ENCODE measurements at regions of chr4 and their contacts with region 1.

Region 1: GRCh38 chr4:152679414-152680281 is at the start of gene TMEM154:
- DNase-seq: peak; percentile 97
- H3K4me3 ChIP-seq: peak within 1 kb of the TSS; percentile 71 to 85 (median 81)
- H3K27ac ChIP-seq: peak within 1 kb of the TSS; percentile 98
- H3K4me1 ChIP-seq: peaks cover 46% of the 10 kb centered on the region
- H3K27me3 ChIP-seq: no peaks in the 10 kb centered on the region
- CTCF ChIP-seq: no peak
- total RNA-seq, gene TMEM154: 15.2 to 119 TPM

Region 2: DNA sequence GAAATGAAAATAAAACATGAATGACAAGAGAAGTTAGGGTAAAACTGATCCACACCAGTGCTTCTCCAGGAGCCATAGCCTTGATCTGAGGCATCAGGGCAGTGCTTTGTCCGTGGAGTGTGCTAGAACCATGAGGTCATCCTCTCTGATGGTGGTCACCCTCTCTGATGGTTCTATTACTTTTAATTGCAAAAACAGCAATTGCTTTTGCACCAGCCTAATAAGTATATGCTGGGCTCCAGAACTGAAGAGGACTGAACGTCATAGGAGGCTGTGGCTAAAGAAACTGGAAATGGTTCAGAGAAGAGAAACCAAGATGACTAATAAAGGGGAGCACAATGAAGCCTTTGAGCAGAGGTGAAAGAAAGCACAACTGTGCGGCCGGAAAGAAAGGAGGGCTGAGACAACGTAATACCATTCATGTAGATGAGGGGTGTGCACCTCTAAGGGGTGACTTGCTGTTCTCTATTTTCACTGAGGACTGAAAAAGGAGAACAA is 17.2 kb after region 1 on chr4:
- CTCF ChIA-PET with region 1: no interaction called
- dilution Hi-C with region 1: no loop called
- in situ Hi-C with region 1: no loop called
- intact Hi-C with region 1: loop called (anchors 2 kb)
- DNase-seq: peak; percentile 99
- H3K4me3 ChIP-seq: peak overlapping the region in 2 of 3 experiments; percentile 13 to 14
- H3K27ac ChIP-seq: peak overlapping the region; percentile 100
- H3K4me1 ChIP-seq: peaks cover 31% of the 10 kb centered on the region
- H3K27me3 ChIP-seq: no peaks in the 10 kb centered on the region
- CTCF ChIP-seq: no peak

Region 3: GRCh38 chr4:152729466-152729865 is 49.8 kb after region 1 on chr4:
- CTCF ChIA-PET with region 1: no interaction called
- dilution Hi-C with region 1: no loop called
- in situ Hi-C with region 1: no loop called
- intact Hi-C with region 1: loop called (anchors 2 kb)
- DNase-seq: peak; percentile 87
- H3K4me3 ChIP-seq: no peak overlapping the region
- H3K27ac ChIP-seq: no peak overlapping the region
- H3K4me1 ChIP-seq: peaks cover 7% of the 10 kb centered on the region
- H3K27me3 ChIP-seq: no peaks in the 10 kb centered on the region
- CTCF ChIP-seq: peak in 1 of 2 donors; percentile 10

Region 4: DNA sequence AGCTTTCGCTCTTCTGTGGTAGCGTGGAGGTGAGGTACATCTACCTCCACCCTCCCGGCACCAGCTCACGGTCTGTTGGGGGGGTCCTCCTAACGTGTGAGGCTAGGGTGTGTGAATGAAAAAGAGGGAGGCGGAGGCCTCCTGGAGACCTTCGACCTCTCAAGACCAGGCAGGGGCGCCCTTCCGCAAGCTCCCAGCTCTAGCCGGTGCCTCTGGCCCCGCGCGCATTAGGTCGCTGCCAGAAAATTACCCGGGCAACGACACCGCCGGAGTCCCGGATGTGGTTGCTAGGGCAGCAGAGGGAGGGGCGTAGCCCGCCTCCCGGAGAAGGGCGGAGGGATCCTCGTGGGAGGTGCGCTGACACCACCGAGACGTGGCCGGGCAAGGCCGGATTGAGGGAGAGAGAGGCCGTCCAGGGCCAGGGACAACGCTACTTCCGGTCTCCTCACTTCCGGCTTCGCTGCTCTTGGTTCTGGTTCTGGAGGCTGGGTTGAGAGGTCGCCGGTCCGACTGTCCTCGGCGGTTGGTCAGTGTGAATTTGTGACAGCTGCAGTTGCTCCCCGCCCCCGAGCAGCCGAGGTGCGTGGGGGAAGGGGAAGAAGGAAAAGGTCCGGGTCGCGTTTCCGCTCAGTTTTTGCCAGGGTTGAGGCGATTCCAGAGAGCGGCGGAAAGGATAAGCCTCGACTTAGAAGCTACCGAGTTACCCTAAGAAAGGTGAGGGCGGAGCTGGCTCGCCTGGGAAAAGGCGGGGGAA is 100.0 kb after region 1 on chr4 and contains the starts of genes ARFIP1 and TIGD4:
- CTCF ChIA-PET with region 1: no interaction called
- dilution Hi-C with region 1: no loop called
- in situ Hi-C with region 1: no loop called
- intact Hi-C with region 1: loop called (anchors 2 kb)
- DNase-seq: peak; percentile 97
- H3K4me3 ChIP-seq: peak within 1 kb of the TSS; percentile 64 to 80 (median 66)
- H3K27ac ChIP-seq: peak within 1 kb of the TSS; percentile 86
- H3K4me1 ChIP-seq: peaks cover 22% of the 10 kb centered on the region
- H3K27me3 ChIP-seq: no peaks in the 10 kb centered on the region
- CTCF ChIP-seq: peak in 1 of 2 donors; percentile 23
- total RNA-seq, gene ARFIP1: 34.8 to 42.8 TPM
- total RNA-seq, gene TIGD4: 0.50 to 0.71 TPM

Measured in mammary epithelial cell (primary cell).